ENCODE measurements at regions of chr13 and their contacts with region 1.

Region 1: DNA sequence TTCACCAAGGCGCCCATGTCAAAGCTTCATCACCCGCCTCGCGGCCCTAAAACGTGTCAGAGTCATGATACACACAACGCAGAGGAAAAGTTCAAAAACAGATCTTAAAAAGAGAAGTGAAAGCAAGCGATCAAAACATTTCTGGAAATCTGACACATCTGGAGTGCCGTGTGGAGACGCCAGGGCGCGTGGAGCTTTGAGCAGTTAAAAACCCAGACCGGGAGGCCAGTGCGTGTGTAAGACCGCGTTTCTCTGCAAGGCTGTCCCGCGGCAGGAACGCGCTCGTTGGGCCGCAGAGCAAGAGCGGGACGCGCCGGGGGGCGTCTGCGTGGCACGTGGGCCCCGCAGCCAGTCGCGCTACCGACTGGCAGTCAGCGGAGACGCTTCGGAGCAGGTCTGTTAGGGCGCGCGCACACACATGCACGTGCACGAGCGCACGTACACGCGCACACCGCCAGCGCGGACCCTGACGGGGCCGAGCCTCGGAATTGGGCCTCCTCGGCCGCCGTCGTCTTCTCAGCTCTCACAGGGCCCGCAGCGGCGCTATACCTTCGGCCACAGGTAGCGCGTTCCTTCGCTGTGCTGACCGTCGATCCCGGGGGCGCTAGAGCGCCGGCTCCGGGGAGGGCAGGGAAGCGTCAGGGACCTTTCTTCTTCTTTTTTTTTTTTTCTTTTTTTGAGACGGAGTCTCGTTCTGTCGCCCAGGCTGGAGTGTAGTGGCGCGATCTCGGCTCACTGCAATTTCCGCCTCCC is 35.8 kb downstream of the RNF6 start:
- DNase-seq: peak; percentile 43
- ATAC-seq: peak; percentile 96
- H3K4me3 ChIP-seq: peak overlapping the region; percentile 62 to 70
- H3K27ac ChIP-seq: peak overlapping the region; percentile 63
- H3K4me1 ChIP-seq: no peaks in the 10 kb centered on the region
- H3K27me3 ChIP-seq: no peaks in the 10 kb centered on the region
- CTCF ChIP-seq: peak; percentile 78

Region 2: GRCh38 chr13:26498656-26499591 is 312.6 kb after region 1 on chr13:
- CTCF ChIA-PET with region 1: interaction called, 17 read pairs
- POLR2A ChIA-PET with region 1: no interaction called
- in situ Hi-C with region 1: no loop called
- intact Hi-C with region 1: loop called (anchors 2 kb)
- DNase-seq: no peak
- ATAC-seq: no peak
- H3K4me3 ChIP-seq: no peak overlapping the region
- H3K27ac ChIP-seq: no peak overlapping the region
- H3K4me1 ChIP-seq: no peaks in the 10 kb centered on the region
- H3K27me3 ChIP-seq: no peaks in the 10 kb centered on the region
- CTCF ChIP-seq: peak; percentile 20; the same call in 1 of the 2 replicates

Measured in Panc1 (cell line).